Panc1 (cell line): ENCODE measurements at regions of chr11 and their contacts with region 1.

Region 1: GRCh38 chr11:5476184-5476819 is 12.2 kb upstream of the OR52D1 start:
- DNase-seq: peak; percentile 39
- ATAC-seq: peak; percentile 88
- H3K4me3 ChIP-seq: no peak overlapping the region
- H3K27ac ChIP-seq: no peak overlapping the region
- H3K4me1 ChIP-seq: no peaks in the 10 kb centered on the region
- H3K27me3 ChIP-seq: peaks cover 13% of the 10 kb centered on the region
- CTCF ChIP-seq: peak; percentile 89

Region 2: DNA sequence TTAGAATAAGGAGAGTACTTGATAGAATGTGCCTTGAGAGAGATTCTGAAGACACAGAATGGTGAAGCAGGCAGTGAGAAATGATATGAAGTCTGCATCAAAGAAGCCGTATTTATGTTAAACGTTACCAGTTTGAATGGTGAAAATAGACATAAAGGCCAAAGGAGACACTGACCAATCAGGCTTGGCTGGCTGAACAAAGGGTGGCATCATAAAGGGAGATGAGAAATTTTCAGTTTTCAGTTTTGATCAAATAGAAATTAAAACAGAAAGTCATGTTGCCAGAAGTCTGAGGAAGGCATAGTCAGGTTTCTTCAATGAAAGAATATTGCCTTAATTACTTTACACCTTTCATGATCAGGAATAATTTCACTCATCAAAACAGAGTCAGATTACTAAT is 713.2 kb before region 1 on chr11:
- CTCF ChIA-PET with region 1: no interaction called
- POLR2A ChIA-PET with region 1: no interaction called
- in situ Hi-C with region 1: no loop called
- intact Hi-C with region 1: no loop called
- DNase-seq: no peak
- ATAC-seq: no peak
- H3K4me3 ChIP-seq: no peak overlapping the region
- H3K27ac ChIP-seq: no peak overlapping the region
- H3K4me1 ChIP-seq: no peaks in the 10 kb centered on the region
- H3K27me3 ChIP-seq: no peaks in the 10 kb centered on the region
- CTCF ChIP-seq: no peak

Region 3: GRCh38 chr11:5137014-5137413 is 339.3 kb before region 1 on chr11:
- CTCF ChIA-PET with region 1: no interaction called
- POLR2A ChIA-PET with region 1: no interaction called
- in situ Hi-C with region 1: no loop called
- intact Hi-C with region 1: no loop called
- DNase-seq: no peak
- ATAC-seq: no peak
- H3K4me3 ChIP-seq: no peak overlapping the region
- H3K27ac ChIP-seq: no peak overlapping the region
- H3K4me1 ChIP-seq: no peaks in the 10 kb centered on the region
- H3K27me3 ChIP-seq: no peaks in the 10 kb centered on the region; the same call in 1 of the 2 replicates
- CTCF ChIP-seq: no peak

Region 4: GRCh38 chr11:5550440-5551095 is 74.3 kb after region 1 on chr11:
- CTCF ChIA-PET with region 1: interaction called, 3 read pairs
- POLR2A ChIA-PET with region 1: no interaction called
- in situ Hi-C with region 1: no loop called
- intact Hi-C with region 1: loop called (anchors 5 kb)
- DNase-seq: peak; percentile 54
- ATAC-seq: 0 out of 2 replicates have a peak, but pooled peaks have one; percentile 60
- H3K4me3 ChIP-seq: no peak overlapping the region
- H3K27ac ChIP-seq: no peak overlapping the region
- H3K4me1 ChIP-seq: no peaks in the 10 kb centered on the region
- H3K27me3 ChIP-seq: no peaks in the 10 kb centered on the region
- CTCF ChIP-seq: no peak

Region 5: GRCh38 chr11:5581014-5581413 is 104.7 kb after region 1 on chr11:
- CTCF ChIA-PET with region 1: no interaction called
- POLR2A ChIA-PET with region 1: no interaction called
- in situ Hi-C with region 1: no loop called
- intact Hi-C with region 1: no loop called
- DNase-seq: no peak
- ATAC-seq: 0 out of 2 replicates have a peak, but pooled peaks have one; percentile 42
- H3K4me3 ChIP-seq: no peak overlapping the region
- H3K27ac ChIP-seq: no peak overlapping the region
- H3K4me1 ChIP-seq: no peaks in the 10 kb centered on the region
- H3K27me3 ChIP-seq: peaks cover 2% of the 10 kb centered on the region; the same call in 1 of the 2 replicates
- CTCF ChIP-seq: no peak

Region 6: DNA sequence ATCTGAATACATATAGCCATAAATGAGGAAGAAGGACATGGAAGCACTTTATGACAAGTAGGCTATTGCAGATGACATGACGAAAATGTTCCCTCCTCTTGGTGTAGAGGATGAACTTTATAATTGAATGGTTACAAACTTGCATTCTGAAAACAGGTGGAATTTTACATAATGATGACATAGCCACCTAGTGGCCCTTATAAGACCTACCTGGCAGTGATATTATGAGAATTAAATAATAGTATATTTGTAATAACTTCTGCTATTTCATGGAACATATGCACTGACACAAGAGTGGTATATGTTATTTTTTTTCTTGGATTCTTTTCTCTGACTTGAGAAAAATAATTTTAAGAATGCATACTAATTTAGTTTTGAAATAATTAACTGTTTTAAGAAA is 236.2 kb after region 1 on chr11:
- CTCF ChIA-PET with region 1: no interaction called
- POLR2A ChIA-PET with region 1: no interaction called
- in situ Hi-C with region 1: no loop called
- intact Hi-C with region 1: loop called (anchors 5 kb)
- DNase-seq: no peak
- ATAC-seq: peak; percentile 73
- H3K4me3 ChIP-seq: no peak overlapping the region
- H3K27ac ChIP-seq: no peak overlapping the region
- H3K4me1 ChIP-seq: no peaks in the 10 kb centered on the region
- H3K27me3 ChIP-seq: peaks cover 12% of the 10 kb centered on the region
- CTCF ChIP-seq: peak; percentile 73

Region 7: GRCh38 chr11:6362873-6363678 is 886.8 kb after region 1 on chr11:
- CTCF ChIA-PET with region 1: no interaction called
- POLR2A ChIA-PET with region 1: no interaction called
- in situ Hi-C with region 1: no loop called
- intact Hi-C with region 1: no loop called
- DNase-seq: peak; percentile 66
- ATAC-seq: peak; percentile 98
- H3K4me3 ChIP-seq: no peak overlapping the region
- H3K27ac ChIP-seq: no peak overlapping the region
- H3K4me1 ChIP-seq: no peaks in the 10 kb centered on the region
- H3K27me3 ChIP-seq: peaks cover 2% of the 10 kb centered on the region
- CTCF ChIP-seq: peak; percentile 99